ENCODE measurements at regions of chr1 and their contacts with region 1.

Region 1: DNA sequence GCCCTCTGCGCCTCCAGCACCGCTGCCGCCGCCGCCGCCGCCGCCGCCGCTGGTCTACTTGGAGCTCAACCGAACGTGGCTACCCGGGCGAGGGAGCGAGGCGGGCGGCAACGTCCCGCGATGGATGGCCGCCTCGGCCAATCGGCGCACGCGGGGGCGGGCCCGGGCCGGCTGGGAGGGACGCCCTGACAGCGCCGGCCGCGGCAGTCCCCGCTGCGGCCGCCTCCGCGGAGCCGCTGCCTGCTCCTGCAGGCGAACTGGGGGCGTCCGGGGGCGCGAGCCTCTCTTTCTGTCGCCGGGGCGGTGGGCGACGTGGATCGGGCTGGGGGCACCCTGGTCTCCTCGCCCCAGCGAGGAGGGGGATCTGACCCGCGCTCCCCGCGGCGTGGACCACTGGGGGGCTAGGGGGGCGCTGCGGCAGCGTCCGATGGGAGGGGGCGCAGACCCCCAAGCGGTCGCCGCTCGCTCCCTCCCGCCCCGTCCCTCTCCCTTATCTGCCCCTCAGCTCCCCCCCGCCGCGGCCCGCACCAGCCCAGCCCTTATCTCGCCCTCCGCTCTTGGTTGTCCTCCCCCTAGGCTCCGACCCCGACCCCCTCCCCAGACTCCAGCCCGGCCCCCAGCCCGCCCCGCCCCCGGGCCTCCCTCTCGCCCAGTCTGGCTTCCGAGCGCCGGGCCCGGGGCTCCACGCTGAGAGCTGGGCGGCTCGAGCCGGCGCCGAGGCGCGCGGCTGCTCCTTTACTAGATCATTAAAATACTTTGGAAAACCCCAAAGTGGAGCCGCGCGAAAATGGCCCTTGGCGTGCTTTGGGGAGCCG is at the start of gene SSBP3:
- DNase-seq: peak; percentile 95
- H3K4me3 ChIP-seq: peak within 1 kb of the TSS; percentile 71 to 85 (median 80)
- H3K27ac ChIP-seq: peak within 1 kb of the TSS; percentile 61
- H3K4me1 ChIP-seq: peaks cover 41% of the 10 kb centered on the region
- H3K27me3 ChIP-seq: no peaks in the 10 kb centered on the region
- CTCF ChIP-seq: peak in 1 of 2 donors; percentile 6
- POLR2A ChIP-seq: no peak
- total RNA-seq, gene SSBP3: 49.5 and 59.4 TPM in 2 replicates

Region 2: GRCh38 chr1:54070171-54070837 is 336.2 kb before region 1 on chr1:
- CTCF ChIA-PET with region 1: no interaction called
- POLR2A ChIA-PET with region 1: no interaction called
- dilution Hi-C with region 1: no loop called
- intact Hi-C with region 1: loop called (anchors 2 kb)
- DNase-seq: peak; percentile 69
- H3K4me3 ChIP-seq: no peak overlapping the region
- H3K27ac ChIP-seq: no peak overlapping the region
- H3K4me1 ChIP-seq: no peaks in the 10 kb centered on the region
- H3K27me3 ChIP-seq: no peaks in the 10 kb centered on the region
- CTCF ChIP-seq: peak; percentile 44 to 54
- POLR2A ChIP-seq: no peak

Region 3: GRCh38 chr1:54273092-54273794 is 133.3 kb before region 1 on chr1:
- CTCF ChIA-PET with region 1: interaction called, 6 read pairs
- POLR2A ChIA-PET with region 1: no interaction called
- dilution Hi-C with region 1: no loop called
- intact Hi-C with region 1: loop called (anchors 10 kb)
- DNase-seq: peak; percentile 82
- H3K4me3 ChIP-seq: no peak overlapping the region
- H3K27ac ChIP-seq: peak overlapping the region; percentile 30
- H3K4me1 ChIP-seq: peaks cover 19% of the 10 kb centered on the region
- H3K27me3 ChIP-seq: no peaks in the 10 kb centered on the region
- CTCF ChIP-seq: peak; percentile 7 to 62
- POLR2A ChIP-seq: no peak

Region 4: GRCh38 chr1:54335755-54336108 is 70.8 kb before region 1 on chr1:
- CTCF ChIA-PET with region 1: interaction called, 3 read pairs
- POLR2A ChIA-PET with region 1: no interaction called
- dilution Hi-C with region 1: no loop called
- intact Hi-C with region 1: loop called (anchors 1 kb)
- DNase-seq: peak; percentile 90
- H3K4me3 ChIP-seq: peak overlapping the region in 1 of 3 experiments; percentile 18
- H3K27ac ChIP-seq: peak overlapping the region; percentile 89
- H3K4me1 ChIP-seq: peaks cover 31% of the 10 kb centered on the region
- H3K27me3 ChIP-seq: no peaks in the 10 kb centered on the region
- CTCF ChIP-seq: no peak
- POLR2A ChIP-seq: peak; percentile 75

Region 5: DNA sequence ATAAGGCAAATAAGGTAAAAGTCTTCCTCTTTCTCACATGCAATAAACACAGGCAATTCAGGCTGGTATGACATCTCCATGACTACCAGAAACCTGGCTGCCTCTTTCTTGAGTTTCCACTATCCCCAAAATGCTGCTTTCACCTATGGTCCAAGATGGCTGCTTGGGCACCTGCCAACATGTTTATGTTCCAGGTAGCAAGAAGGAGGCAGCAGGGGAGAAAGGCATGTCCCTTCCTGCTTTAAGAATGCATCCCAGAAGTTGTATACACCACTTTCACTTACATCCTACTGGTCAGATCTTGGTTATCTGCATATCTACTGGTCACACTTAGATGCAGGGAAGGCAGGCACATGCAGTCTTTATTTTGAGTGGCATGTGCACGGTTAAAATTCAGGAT is 122.1 kb after region 1 on chr1:
- CTCF ChIA-PET with region 1: no interaction called
- POLR2A ChIA-PET with region 1: no interaction called
- dilution Hi-C with region 1: no loop called
- intact Hi-C with region 1: no loop called
- DNase-seq: no peak
- H3K4me3 ChIP-seq: no peak overlapping the region
- H3K27ac ChIP-seq: no peak overlapping the region
- H3K4me1 ChIP-seq: no peaks in the 10 kb centered on the region
- H3K27me3 ChIP-seq: peaks cover 3 to 7% of the 10 kb centered on the region in 2 experiments
- CTCF ChIP-seq: no peak
- POLR2A ChIP-seq: no peak

Region 6: GRCh38 chr1:54542120-54542961 is 135.8 kb after region 1 on chr1:
- CTCF ChIA-PET with region 1: no interaction called
- POLR2A ChIA-PET with region 1: no interaction called
- dilution Hi-C with region 1: no loop called
- intact Hi-C with region 1: loop called (anchors 2 kb)
- DNase-seq: peak; percentile 38
- H3K4me3 ChIP-seq: peak overlapping the region; percentile 37 to 56 (median 39)
- H3K27ac ChIP-seq: peak overlapping the region; percentile 54
- H3K4me1 ChIP-seq: peaks cover 19% of the 10 kb centered on the region
- H3K27me3 ChIP-seq: no peaks in the 10 kb centered on the region
- CTCF ChIP-seq: peak in 1 of 2 donors; percentile 16
- POLR2A ChIP-seq: peak; percentile 29

Measured in endothelial cell of umbilical vein (primary cell).